ENCODE measurements at regions of chr12 and their contacts with region 1.

Region 1: GRCh38 chr12:57088459-57089248 is at the start of gene NAB2:
- DNase-seq: peak; percentile 95
- ATAC-seq: peak; percentile 80
- H3K4me3 ChIP-seq: peak within 1 kb of the TSS; percentile 83 to 93 (median 84)
- H3K27ac ChIP-seq: peak within 1 kb of the TSS; percentile 88
- H3K4me1 ChIP-seq: peaks cover 28% of the 10 kb centered on the region
- H3K27me3 ChIP-seq: no peaks in the 10 kb centered on the region; a peak in 1 of 5 replicates
- CTCF ChIP-seq: 0 out of 2 replicates have a peak, but pooled peaks have one; percentile 11
- EP300 ChIP-seq: peak; percentile 21 to 73; a peak in 3 of 4 replicates
- POLR2A ChIP-seq: peak; percentile 64 to 89
- RAD21 ChIP-seq: peak; percentile 16; the same call in 1 of the 2 replicates
- total RNA-seq, gene NAB2: 11.0 and 11.7 TPM in 2 replicates

Region 2: GRCh38 chr12:56839915-56840325 is 248.7 kb before region 1 on chr12:
- CTCF ChIA-PET with region 1: no interaction called
- POLR2A ChIA-PET with region 1: no interaction called
- in situ Hi-C with region 1: no loop called
- intact Hi-C with region 1: no loop called
- DNase-seq: peak; percentile 41
- ATAC-seq: peak; percentile 86
- H3K4me3 ChIP-seq: no peak overlapping the region
- H3K27ac ChIP-seq: no peak overlapping the region
- H3K4me1 ChIP-seq: peaks cover 14% of the 10 kb centered on the region; the same call in 1 of the 2 replicates
- H3K27me3 ChIP-seq: peaks cover 0 to 4% of the 10 kb centered on the region in 2 experiments; a peak in 2 of 5 replicates
- CTCF ChIP-seq: peak; percentile 90
- EP300 ChIP-seq: no peak
- POLR2A ChIP-seq: no peak
- RAD21 ChIP-seq: peak; percentile 89

Region 3: GRCh38 chr12:57069523-57069922 is 19.1 kb before region 1 on chr12:
- CTCF ChIA-PET with region 1: interaction called, 11 read pairs
- POLR2A ChIA-PET with region 1: interaction called, 7 read pairs
- in situ Hi-C with region 1: no loop called
- intact Hi-C with region 1: loop called (anchors 1 kb)
- DNase-seq: peak; percentile 81
- ATAC-seq: peak; percentile 97
- H3K4me3 ChIP-seq: no peak overlapping the region
- H3K27ac ChIP-seq: no peak overlapping the region
- H3K4me1 ChIP-seq: no peaks in the 10 kb centered on the region
- H3K27me3 ChIP-seq: no peaks in the 10 kb centered on the region
- CTCF ChIP-seq: peak; percentile 90
- EP300 ChIP-seq: no peak
- POLR2A ChIP-seq: no peak
- RAD21 ChIP-seq: peak; percentile 94

Region 4: GRCh38 chr12:57101844-57102695 is 13.4 kb after region 1 on chr12:
- CTCF ChIA-PET with region 1: no interaction called
- POLR2A ChIA-PET with region 1: interaction called, 184 read pairs
- in situ Hi-C with region 1: no loop called
- intact Hi-C with region 1: loop called (anchors 1 kb)
- DNase-seq: peak; percentile 99
- ATAC-seq: peak; percentile 88
- H3K4me3 ChIP-seq: peak overlapping the region; percentile 19 to 65 (median 34); a peak in 5 of 6 replicates
- H3K27ac ChIP-seq: peak overlapping the region; percentile 99
- H3K4me1 ChIP-seq: peaks cover 44% of the 10 kb centered on the region
- H3K27me3 ChIP-seq: no peaks in the 10 kb centered on the region
- CTCF ChIP-seq: peak; percentile 58
- EP300 ChIP-seq: peak; percentile 52 to 72; a peak in 3 of 4 replicates
- POLR2A ChIP-seq: peak; percentile 53 to 71; a peak in 3 of 4 replicates
- RAD21 ChIP-seq: no peak

Region 5: DNA sequence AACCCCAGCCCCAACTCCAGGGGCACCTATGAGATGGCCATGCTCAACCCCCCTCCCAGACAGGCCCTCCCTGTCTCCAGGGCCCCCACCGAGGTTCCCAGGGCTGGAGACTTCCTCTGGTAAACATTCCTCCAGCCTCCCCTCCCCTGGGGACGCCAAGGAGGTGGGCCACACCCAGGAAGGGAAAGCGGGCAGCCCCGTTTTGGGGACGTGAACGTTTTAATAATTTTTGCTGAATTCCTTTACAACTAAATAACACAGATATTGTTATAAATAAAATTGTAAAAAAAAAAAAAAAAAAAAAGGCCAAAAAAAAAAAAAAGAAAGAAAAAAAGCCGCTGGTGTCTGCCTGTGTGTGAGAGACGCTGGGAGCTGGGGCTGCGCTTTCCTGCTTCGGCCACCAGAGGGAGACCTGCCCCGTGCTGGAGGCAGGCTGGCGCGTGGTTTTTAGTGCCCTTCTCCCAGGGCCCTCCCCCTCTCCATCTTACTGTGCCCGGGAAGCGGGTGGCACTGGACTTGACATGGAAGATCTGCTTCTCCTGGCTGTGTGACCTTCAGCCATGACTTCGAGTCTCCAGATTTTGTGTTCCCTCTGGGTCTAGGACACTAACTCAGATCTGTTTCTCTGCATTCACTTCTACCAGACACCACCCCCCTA is 124.5 kb after region 1 on chr12:
- CTCF ChIA-PET with region 1: no interaction called
- POLR2A ChIA-PET with region 1: no interaction called
- in situ Hi-C with region 1: no loop called
- intact Hi-C with region 1: no loop called
- DNase-seq: peak; percentile 53
- ATAC-seq: peak; percentile 42
- H3K4me3 ChIP-seq: no peak overlapping the region
- H3K27ac ChIP-seq: no peak overlapping the region
- H3K4me1 ChIP-seq: peaks cover 37% of the 10 kb centered on the region
- H3K27me3 ChIP-seq: peaks cover 9 to 33% of the 10 kb centered on the region in 2 experiments
- CTCF ChIP-seq: peak; percentile 84
- EP300 ChIP-seq: no peak
- POLR2A ChIP-seq: no peak
- RAD21 ChIP-seq: peak; percentile 66

Region 6: GRCh38 chr12:58988643-58989344 is 1900.1 kb after region 1 on chr12:
- CTCF ChIA-PET with region 1: no interaction called
- POLR2A ChIA-PET with region 1: no interaction called
- in situ Hi-C with region 1: no loop called
- intact Hi-C with region 1: no loop called
- DNase-seq: no peak
- ATAC-seq: no peak
- H3K4me3 ChIP-seq: no peak overlapping the region
- H3K27ac ChIP-seq: no peak overlapping the region
- H3K4me1 ChIP-seq: no peaks in the 10 kb centered on the region
- H3K27me3 ChIP-seq: no peaks in the 10 kb centered on the region
- CTCF ChIP-seq: no peak
- EP300 ChIP-seq: no peak
- POLR2A ChIP-seq: no peak
- RAD21 ChIP-seq: no peak

Measured in HepG2 (cell line).